Activated CD4-positive, alpha-beta T cell treated with anti-CD3 and anti-CD28 coated beads, Interleukin-2, amount 10 ng/mL, durations not matched to agents 24 days and 14 days (primary cell): ENCODE measurements at regions of chr10 and their contacts with region 1.

Region 1: DNA sequence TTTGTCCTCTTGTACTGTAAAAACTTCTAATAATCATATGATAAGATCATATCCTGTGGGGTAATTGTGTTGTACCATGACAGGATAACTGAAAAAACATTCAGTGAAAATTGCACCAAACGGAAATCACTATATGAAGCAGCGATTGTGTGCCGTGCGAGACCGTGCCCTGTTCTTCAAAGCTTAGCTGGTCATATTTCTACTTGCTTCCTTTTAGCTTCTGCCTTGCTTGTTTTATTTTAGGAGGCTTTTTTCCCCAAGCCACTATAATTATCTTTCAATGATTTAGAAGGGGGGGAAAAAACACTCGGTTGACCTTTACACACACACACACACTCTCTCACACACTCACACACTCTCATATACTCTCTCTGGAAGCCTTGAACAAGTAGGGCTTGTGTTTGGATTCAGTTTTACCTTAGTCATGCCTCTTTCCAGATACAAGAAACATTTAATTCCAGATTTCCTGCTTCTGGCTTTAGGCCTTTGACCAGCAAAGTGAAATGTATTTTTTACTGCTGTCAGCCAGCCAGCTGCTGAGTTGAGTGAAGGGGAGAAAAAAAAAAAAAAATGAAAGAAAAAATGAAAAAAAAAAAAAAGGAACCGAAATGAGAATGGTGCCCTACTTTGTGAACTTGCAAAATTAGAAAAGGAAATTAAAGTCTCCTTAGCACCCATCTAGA is 181.4 kb downstream of the ARID5B start:
- DNase-seq: peak; percentile 84
- H3K4me3 Mint-ChIP-seq: peak overlapping the region; percentile 80
- H3K27ac Mint-ChIP-seq: peak overlapping the region; percentile 92
- H3K4me1 Mint-ChIP-seq: peaks cover 71% of the 10 kb centered on the region
- H3K27me3 Mint-ChIP-seq: no peaks in the 10 kb centered on the region

Region 2: DNA sequence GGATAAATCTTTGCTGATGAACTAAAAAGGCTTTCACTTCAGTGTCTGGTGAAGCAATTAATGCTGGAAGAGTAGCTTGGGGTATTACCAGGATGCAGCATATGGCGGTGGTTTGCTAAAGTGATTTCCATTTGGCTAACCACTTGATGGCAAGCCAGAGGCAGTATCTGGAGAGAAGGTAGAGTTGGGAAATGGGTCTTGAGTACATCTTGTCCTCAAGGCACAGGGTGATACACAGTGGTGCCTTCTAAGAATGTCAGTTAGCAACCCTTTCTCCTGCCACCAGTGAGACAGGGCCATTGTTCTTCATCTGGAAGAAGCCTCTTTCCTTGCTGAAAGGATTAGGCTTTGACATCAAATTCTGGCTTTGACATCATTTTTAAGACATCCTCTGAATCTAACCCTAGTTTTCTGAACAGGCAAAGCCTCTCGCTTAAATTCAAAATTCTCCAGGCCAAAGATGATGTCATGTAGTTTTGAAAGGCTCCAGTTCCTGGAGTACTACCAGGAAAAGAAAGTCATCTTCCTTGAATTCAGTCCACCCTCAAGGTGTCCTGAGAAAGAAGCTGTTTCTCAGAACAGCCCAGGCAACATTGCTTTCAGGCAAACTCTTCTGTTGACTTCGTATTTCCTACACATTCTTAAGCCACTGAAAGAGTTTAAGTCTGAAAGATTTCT is 18.9 kb before region 1 on chr10:
- intact Hi-C with region 1: loop called (anchors 2 kb)
- DNase-seq: peak; percentile 73
- H3K4me3 Mint-ChIP-seq: peak overlapping the region; percentile 69
- H3K27ac Mint-ChIP-seq: peak overlapping the region; percentile 84
- H3K4me1 Mint-ChIP-seq: peaks cover 69% of the 10 kb centered on the region
- H3K27me3 Mint-ChIP-seq: no peaks in the 10 kb centered on the region